Sciatic nerve (tissue), 2 donors: ENCODE measurements at regions of chr17 and their contacts with region 1.

Region 1: DNA sequence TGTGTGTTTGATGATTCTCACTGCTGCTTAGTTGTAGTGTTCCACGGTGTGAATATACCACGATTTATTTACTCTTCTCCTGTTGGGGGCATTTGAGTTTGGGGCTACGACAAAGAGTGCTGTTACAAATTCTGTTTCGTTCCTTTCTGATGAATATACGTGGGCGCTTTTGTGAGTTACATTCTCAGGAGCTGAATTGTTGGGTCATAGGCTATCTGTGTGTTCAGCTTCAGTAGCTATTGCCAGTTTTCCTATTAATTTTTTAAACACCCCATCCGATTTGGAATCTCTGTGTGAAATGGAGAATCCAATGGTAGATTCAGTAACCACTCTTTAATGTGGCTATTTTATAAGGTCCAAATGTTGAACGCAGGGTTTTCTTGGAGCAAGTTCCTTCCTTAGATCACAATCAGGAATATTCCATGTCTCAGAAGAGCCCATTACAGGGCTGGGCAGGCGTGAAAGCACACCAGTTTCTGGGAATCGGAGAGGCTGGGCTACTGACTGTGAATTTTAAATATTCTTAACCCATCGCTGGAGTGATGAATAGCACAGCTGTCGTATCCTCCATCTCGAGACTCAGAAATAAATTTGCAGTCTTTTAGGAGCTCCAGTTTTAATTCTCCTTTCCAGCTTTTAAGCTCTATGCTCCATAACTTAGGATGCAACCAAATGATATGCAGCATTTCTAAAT is 115.9 kb downstream of the PITPNC1 start:
- DNase-seq: no peak
- ATAC-seq: no peak

Region 2: GRCh38 chr17:67466251-67466796 is 26.6 kb before region 1 on chr17:
- intact Hi-C with region 1: loop called (anchors 1 kb)
- DNase-seq: no peak
- ATAC-seq: no peak